Activated T-helper 2 cell treated with anti-CD3 and anti-CD28 coated beads, Interferon-gamma antibody, Interleukin-2, Interleukin-4, amounts not matched to agents 10 μg/mL and 5 μg/mL and 100 μg/mL, durations not matched to agents 14 hours and 24 hours and 36 hours (primary cell): ENCODE measurements at regions of chr5 and their contacts with region 1.

Region 1: DNA sequence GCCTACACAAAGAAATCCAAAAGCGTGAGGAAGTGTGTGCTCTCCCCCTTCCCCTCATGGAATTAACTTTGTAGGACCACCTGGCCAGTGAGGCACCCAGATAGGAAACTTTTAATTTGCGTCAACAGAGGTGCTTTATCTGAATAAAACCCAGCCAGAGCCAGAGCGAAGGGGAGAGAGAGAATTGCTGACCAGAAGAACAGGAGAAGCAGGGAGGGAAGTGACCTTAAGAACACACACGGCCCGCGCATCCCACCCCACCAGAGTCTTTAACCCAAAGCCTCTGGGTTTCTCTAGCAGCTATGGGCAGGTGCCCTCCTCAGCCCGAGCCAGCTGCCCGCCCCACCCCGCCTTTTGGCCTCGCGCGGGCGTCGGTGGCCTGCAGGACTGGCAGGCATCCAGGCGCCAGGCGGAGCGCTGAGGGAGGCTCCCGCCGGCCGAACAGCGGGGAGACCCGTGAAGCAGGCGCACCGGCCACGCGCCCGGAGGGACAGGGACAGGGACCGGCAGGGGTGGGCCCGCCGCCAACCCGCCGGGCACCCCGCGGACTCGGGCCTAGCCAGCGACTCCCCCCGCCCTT is 580 bp downstream of the ERAP1 start:
- DNase-seq: no peak
- H3K4me3 Mint-ChIP-seq: peak overlapping the region; percentile 93
- H3K27ac Mint-ChIP-seq: peak overlapping the region; percentile 92
- H3K4me1 Mint-ChIP-seq: peaks cover 62% of the 10 kb centered on the region
- H3K27me3 Mint-ChIP-seq: no peaks in the 10 kb centered on the region

Region 2: DNA sequence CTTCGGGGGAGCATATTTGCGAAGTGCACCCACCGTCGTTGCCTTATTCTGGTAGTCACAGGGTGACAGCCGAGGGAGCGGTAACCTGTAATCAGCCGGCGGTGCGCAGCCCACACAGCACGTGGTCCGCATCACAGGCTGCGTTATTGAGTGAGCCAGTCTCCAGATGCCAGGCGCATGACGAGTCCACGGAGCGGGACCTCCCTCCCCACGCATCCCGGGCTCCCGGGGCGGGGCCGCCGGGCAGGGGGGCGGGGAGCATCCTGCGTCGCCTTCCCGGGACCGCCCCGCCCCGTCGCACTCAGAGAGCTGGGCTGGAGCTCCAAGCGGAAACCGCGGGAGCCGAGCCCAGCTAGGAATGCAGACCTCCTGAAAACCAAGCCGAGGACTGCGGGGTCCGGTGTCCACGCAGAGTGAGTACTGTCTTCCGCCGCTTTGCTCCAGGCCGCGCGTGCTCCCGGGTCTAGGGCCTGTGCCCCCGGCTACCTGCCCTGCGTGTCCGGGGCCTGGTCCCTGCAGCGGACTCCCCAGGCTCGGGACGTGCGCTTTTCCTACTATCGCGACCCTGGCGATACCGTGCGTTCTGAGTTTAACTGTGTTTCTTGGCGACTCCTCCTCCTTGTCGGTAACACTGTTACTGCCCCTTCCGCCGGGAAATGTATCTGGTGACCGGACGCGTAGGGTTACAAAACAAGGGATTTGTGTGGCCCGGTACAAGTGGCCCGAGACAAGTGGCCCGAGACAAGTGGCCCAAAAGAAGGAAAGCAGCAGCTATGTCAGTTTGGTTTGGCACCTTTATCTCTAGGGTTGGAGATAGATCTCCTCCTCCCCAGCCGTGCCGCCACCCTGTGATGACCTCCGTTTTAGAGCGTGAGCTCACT is 104.4 kb before region 1 on chr5:
- intact Hi-C with region 1: loop called (anchors 5 kb)
- DNase-seq: peak; percentile 61
- H3K4me3 Mint-ChIP-seq: peak overlapping the region; percentile 88
- H3K27ac Mint-ChIP-seq: peak overlapping the region; percentile 83
- H3K4me1 Mint-ChIP-seq: peaks cover 35% of the 10 kb centered on the region
- H3K27me3 Mint-ChIP-seq: no peaks in the 10 kb centered on the region

Region 3: GRCh38 chr5:96876292-96876850 is 69.2 kb after region 1 on chr5 and contains the start of gene ERAP2:
- intact Hi-C with region 1: loop called (anchors 5 kb)
- DNase-seq: no peak
- H3K4me3 Mint-ChIP-seq: peak within 1 kb of the TSS; percentile 84
- H3K27ac Mint-ChIP-seq: peak within 1 kb of the TSS; percentile 92
- H3K4me1 Mint-ChIP-seq: peaks cover 64% of the 10 kb centered on the region
- H3K27me3 Mint-ChIP-seq: no peaks in the 10 kb centered on the region
- total RNA-seq, gene ERAP2: 46.8 and 49.3 TPM in 2 replicates

Region 4: DNA sequence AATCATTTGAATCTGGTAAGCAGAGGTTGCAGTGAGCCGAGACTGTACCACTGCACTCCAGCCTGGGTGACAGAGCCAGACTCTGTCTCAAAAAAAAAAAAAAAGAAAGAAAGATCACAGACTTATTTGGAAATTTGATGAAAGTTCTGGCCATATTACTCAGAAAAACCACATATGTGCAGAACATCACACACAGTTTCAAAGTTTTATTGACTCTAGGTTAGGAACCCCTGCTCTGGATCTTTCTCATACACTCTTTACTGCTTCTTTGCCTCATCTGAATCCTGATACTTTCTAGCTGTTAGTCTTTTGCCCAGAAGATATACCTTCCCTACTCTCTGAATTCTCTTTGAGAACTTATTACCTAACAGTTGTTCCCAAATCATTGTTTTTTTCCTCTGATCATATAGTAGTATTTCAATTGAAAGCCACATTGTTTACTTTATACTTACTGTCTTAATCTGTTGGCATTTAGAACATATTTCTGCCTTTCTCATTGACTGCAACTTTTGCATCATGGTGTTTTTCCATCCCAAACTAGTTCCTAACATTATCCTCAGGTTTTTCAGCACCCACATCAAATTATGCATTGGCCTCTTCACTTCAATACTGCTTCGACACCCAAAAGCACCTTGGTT is 197.4 kb after region 1 on chr5:
- intact Hi-C with region 1: loop called (anchors 5 kb)
- DNase-seq: no peak
- H3K4me3 Mint-ChIP-seq: peak overlapping the region; percentile 18
- H3K27ac Mint-ChIP-seq: peak overlapping the region; percentile 73
- H3K4me1 Mint-ChIP-seq: peaks cover 29% of the 10 kb centered on the region
- H3K27me3 Mint-ChIP-seq: no peaks in the 10 kb centered on the region